Lower leg skin (tissue), 4 donors: ENCODE measurements at regions of chrX and their contacts with region 1.

Region 1: DNA sequence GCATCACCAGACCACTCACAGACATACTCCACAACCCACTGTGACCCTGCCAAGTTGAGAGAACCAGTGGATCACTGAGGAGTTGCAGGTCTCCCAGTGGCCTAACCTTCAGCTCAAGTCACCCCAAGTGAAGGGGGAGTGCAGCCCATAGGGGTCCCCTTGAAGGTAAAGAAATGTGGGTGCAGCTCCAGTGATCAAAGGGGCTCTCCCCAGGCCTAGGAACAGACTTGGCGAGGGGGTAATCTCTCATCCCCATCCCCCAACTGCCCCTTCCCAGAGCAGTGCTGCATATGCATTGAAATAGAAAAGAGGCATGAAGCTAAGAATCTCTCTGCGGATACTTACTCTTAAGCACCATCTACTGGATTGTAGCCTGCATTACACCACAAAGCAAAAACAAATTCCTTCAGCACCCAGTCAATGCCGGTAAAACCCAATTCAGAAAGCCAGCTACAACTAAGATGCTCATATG is 27.0 kb downstream of the MAGEE1 start:
- DNase-seq: peak in 1 of 2 donors; percentile 61
- H3K4me3 ChIP-seq: no peak overlapping the region
- CTCF ChIP-seq: no peak
- POLR2A ChIP-seq: no peak

Region 2: GRCh38 chrX:74550295-74550802 is 1904.1 kb before region 1 on chrX:
- intact Hi-C with region 1: loop called (anchors 5 kb)
- DNase-seq: peak; percentile 50 to 96
- H3K4me3 ChIP-seq: no peak overlapping the region
- CTCF ChIP-seq: peak in 1 of 3 donors; percentile 89
- POLR2A ChIP-seq: no peak

Region 3: GRCh38 chrX:76228499-76228898 is 226.0 kb before region 1 on chrX:
- intact Hi-C with region 1: no loop called
- DNase-seq: no peak
- H3K4me3 ChIP-seq: no peak overlapping the region
- CTCF ChIP-seq: no peak
- POLR2A ChIP-seq: no peak

Region 4: DNA sequence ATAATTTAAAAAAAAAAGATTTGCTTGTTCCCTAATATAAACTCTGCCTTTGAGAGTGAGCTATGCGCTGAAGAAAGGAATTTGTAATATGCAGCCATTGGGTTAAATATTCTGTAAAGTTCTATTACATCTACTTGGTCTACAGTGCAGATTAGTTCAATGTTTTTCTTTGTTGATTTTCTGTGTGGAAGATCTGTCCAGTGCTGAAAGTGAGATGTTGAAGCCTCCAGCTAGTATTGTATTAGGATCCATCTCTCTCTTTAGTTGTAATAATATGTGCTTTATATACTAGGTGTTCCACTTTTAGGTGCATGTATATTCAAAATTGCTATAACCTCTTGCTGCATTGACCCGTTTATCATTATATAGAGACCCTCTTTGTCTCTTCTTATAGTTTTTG is 22.9 kb after region 1 on chrX:
- intact Hi-C with region 1: no loop called
- DNase-seq: no peak
- H3K4me3 ChIP-seq: no peak overlapping the region
- CTCF ChIP-seq: no peak
- POLR2A ChIP-seq: no peak

Region 5: DNA sequence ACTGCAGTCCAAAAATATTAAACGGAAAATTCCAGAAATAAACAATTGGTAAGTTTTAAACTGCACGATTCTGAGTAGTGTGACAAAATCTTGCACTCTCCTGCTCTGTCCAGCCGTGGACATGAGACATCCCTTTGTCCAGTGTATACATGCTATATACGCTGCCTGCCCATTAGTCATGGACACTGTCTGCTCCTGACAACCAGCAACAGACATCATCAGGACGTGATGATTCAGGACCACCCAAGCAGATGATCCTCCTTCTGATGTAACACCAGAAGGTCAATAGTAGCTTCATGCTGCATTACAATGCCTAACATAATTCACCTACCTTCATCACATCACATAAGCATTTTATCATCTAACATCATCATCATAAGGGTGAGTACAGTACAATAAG is 1295.2 kb after region 1 on chrX:
- intact Hi-C with region 1: no loop called
- DNase-seq: no peak
- H3K4me3 ChIP-seq: no peak overlapping the region
- CTCF ChIP-seq: no peak
- POLR2A ChIP-seq: no peak